Heart right ventricle (tissue), 16 donors: ENCODE measurements at regions of chr4 and their contacts with region 1.

Region 1: DNA sequence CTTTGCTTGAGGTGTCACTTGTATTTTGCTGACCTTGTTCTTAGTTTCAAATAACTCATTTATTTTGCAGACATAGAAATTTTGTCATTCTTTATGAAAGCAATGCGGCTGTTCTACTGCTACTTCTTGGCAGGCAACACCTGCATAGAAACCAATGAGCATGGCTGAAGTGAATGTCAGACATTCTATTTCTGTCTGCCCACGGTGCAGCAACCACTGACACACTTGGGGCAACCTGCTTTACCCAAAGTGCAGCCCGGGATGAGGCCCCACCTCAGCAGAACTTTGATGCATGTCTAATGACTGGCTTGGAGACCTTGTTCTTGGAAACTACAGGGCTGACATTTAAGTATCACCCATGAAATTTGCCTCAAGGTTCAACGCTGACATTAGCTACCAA is 93.6 kb downstream of the RBM47 start:
- DNase-seq: no peak
- ATAC-seq: no peak
- H3K4me3 ChIP-seq: no peak overlapping the region
- H3K27ac ChIP-seq: no peak overlapping the region
- H3K4me1 ChIP-seq: no peaks in the 10 kb centered on the region
- H3K27me3 ChIP-seq: no peaks in the 10 kb centered on the region
- CTCF ChIP-seq: no peak

Region 2: DNA sequence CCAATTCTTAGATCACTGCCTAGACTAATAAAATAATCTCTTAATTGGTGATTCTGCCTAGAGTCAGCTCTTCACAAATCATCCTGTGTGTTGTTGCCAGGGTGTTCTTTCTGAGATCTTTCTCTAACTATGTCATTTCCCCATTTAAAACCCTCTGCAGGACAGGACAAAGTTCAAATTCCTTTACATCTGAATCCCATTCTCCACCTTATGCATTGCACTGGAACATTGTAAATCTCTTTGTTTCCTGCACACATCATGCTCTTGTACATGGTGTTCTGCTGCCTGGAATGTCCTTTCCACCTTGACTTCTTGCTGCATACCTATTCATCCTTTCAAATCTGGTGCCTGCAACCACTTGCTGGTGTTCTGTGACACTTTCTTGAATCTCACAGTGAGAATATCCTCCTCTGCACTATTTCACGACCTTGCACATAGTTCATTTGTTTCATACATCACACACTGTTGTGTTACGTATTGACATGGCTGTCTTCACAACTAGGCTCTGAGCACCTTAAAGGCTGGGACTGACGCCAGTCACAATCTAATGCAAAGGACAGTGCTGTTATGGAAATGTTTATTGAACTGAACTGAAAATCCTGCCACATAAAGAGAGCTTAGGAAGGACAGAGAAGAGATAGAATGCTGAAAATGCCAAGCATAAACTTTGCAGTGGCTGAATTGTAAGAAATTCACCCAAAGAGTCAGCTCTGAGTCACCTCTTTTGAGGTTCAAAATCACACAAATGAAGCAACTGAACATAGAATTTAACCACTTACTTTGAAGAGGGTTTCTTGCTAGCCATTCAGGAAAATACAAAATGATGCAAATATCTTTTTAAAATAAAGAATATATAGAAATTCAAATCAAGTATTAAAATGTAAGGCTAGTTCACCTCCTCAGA is 871.0 kb before region 1 on chr4:
- intact Hi-C with region 1: loop called in 1 of 10 experiments (anchors 10 kb)
- DNase-seq: no peak
- ATAC-seq: no peak
- H3K4me3 ChIP-seq: no peak overlapping the region
- H3K27ac ChIP-seq: no peak overlapping the region
- H3K4me1 ChIP-seq: no peaks in the 10 kb centered on the region
- H3K27me3 ChIP-seq: no peaks in the 10 kb centered on the region
- CTCF ChIP-seq: no peak